ENCODE measurements at regions of chr3 and their contacts with region 1.

Region 1: DNA sequence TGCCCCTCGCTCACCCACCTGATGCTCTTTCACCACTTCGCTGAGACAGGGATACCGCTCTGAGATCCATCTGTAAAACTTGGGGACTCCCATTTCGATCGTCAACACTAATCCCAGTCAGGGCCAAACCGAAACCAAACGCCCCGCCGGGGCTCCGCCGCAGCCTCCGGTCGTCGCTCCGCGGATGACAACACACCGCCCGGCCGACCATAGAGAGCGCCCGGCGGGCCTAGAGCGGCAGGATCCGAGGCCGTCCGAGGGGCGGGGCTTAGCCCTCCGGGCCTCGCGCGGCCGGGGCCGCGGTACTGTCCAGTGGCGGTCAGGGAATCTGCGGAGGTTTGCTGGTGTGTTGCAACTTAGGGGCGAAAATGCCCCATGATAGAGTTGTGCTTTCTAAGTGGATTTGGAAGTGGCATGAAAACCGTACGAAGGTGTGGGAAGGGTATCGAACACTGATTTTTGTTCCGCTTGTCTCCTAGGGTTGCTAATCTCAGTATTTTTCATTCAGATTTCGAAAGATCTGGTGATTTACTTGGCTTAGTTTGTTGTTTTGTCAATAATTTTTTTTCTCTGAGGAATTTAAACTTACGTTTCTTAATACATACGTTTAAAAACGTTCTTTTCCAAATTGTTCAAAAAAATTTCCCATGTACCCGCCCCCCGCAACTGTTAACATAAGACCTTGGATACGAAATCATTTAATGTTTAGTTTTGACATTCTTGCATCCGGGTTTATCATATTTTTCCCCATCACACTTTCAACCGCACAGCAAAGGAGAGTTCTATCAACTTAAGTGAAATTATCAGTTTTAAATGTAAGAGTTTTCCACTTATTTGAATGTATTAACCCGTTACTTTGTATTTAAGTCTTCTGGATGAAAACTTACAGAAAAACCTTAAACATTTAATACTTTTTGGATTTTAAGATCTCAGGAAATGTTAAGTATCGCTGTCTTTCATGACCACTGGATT is at the start of gene XRN1:
- DNase-seq: peak; percentile 97
- H3K4me3 Mint-ChIP-seq: peak within 1 kb of the TSS; percentile 98
- H3K27ac Mint-ChIP-seq: peak within 1 kb of the TSS; percentile 100
- H3K4me1 Mint-ChIP-seq: peaks cover 27% of the 10 kb centered on the region
- H3K27me3 Mint-ChIP-seq: no peaks in the 10 kb centered on the region
- total RNA-seq, gene XRN1: 63.9 to 64.5 TPM

Region 2: GRCh38 chr3:141498598-141499223 is 949.4 kb before region 1 on chr3:
- CTCF ChIA-PET with region 1: no interaction called
- intact Hi-C with region 1: loop called (anchors 5 kb)
- DNase-seq: peak; percentile 94
- H3K4me3 Mint-ChIP-seq: peak overlapping the region; percentile 48
- H3K27ac Mint-ChIP-seq: peak overlapping the region; percentile 94
- H3K4me1 Mint-ChIP-seq: peaks cover 75% of the 10 kb centered on the region
- H3K27me3 Mint-ChIP-seq: no peaks in the 10 kb centered on the region

Region 3: GRCh38 chr3:141875374-141875892 is 572.7 kb before region 1 on chr3:
- CTCF ChIA-PET with region 1: no interaction called
- intact Hi-C with region 1: loop called (anchors 1 kb)
- DNase-seq: peak; percentile 90
- H3K4me3 Mint-ChIP-seq: peak overlapping the region; percentile 92
- H3K27ac Mint-ChIP-seq: peak overlapping the region; percentile 93
- H3K4me1 Mint-ChIP-seq: peaks cover 28% of the 10 kb centered on the region
- H3K27me3 Mint-ChIP-seq: no peaks in the 10 kb centered on the region

Region 4: DNA sequence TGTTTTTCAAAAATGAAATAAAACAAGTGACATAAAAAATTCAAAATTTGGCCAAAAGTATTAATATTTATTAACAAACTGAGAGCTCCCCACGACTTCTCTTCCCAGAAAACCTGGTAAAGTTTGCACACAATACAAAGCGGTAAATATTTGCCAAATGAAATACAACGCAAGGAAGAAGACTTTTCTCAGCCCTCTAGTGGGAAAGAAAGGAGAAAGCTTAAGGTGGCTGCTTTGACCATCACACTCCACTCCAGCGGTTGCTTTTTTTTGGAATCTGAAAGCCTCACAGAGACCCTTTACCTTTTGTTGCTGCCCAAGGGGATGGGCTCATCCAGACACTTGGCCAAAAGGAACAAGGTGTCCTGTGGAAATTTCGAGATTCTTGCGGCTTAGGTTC is 221.7 kb before region 1 on chr3:
- CTCF ChIA-PET with region 1: no interaction called
- intact Hi-C with region 1: loop called (anchors 2 kb)
- DNase-seq: no peak
- H3K4me3 Mint-ChIP-seq: no peak overlapping the region
- H3K27ac Mint-ChIP-seq: no peak overlapping the region
- H3K4me1 Mint-ChIP-seq: peaks cover 19% of the 10 kb centered on the region
- H3K27me3 Mint-ChIP-seq: no peaks in the 10 kb centered on the region

Region 5: DNA sequence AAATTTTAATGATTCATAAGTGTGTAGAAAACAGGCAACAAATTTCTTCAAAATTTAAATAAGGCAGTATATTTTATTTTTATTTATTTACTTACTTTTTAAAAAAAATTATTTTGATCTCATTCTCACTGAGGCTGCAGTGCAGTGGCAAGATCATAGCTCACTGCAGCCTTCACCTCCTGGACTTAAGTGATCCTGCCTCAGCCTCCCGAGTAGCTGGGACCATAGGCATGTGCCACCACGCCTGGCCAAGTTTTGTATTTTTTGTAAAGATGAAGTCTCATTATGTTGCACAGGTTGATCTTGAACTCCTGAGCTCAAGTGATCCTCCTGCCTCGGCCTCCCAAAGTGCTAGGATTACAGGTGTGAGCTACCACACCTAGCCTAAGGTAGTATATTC is 60.9 kb after region 1 on chr3:
- CTCF ChIA-PET with region 1: interaction called, 3 read pairs
- intact Hi-C with region 1: loop called (anchors 1 kb)
- DNase-seq: no peak
- H3K4me3 Mint-ChIP-seq: peak overlapping the region; percentile 65
- H3K27ac Mint-ChIP-seq: peak overlapping the region; percentile 90
- H3K4me1 Mint-ChIP-seq: peaks cover 23% of the 10 kb centered on the region
- H3K27me3 Mint-ChIP-seq: no peaks in the 10 kb centered on the region

Region 6: DNA sequence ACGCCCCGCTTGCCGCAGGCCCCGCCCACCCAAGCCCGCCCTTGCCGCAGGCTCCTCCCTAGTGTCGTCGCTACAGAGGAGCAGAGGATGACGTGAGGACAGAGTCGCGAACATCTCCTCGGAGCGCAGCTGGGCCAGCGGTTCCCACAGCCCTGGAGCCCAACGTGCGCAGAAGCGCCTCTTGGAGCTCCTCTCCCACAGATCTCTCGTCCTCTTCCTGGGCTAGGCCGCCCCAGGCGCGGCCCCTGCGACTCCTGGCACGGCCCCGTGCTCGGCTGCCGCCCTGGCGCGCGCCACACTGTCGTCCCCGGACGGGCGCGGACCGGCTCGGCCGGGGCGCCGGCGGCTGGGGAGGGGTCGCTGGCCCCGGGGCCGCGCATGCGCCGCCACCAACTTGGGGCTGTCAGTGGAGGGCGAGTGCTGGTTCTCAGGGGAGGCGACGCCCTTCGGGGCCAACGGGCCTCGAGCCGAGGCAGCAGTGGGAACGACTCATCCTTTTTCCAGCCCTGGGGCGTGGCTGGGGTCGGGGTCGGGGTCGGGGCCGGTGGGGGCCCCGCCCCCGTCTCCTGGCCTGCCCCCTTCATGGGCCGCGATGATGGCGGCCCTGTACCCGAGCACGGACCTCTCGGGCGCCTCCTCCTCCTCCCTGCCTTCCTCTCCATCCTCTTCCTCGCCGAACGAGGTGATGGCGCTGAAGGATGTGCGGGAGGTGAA is 276.0 kb after region 1 on chr3 and contains the start of gene TRPC1:
- CTCF ChIA-PET with region 1: no interaction called
- intact Hi-C with region 1: loop called (anchors 1 kb)
- DNase-seq: peak; percentile 57
- H3K4me3 Mint-ChIP-seq: peak within 1 kb of the TSS; percentile 83
- H3K27ac Mint-ChIP-seq: peak within 1 kb of the TSS; percentile 82
- H3K4me1 Mint-ChIP-seq: peaks cover 10% of the 10 kb centered on the region
- H3K27me3 Mint-ChIP-seq: peaks cover 20% of the 10 kb centered on the region
- total RNA-seq, gene TRPC1: 3.1 to 4.8 TPM